ENCODE measurements at regions of chr7 and their contacts with region 1.

Region 1: GRCh38 chr7:116984917-116985316 is 31.6 kb downstream of the ST7 start:
- H3K4me3 ChIP-seq: no peak overlapping the region
- H3K27ac ChIP-seq: no peak overlapping the region
- H3K4me1 ChIP-seq: no peaks in the 10 kb centered on the region
- CTCF ChIP-seq: no peak

Region 2: GRCh38 chr7:116929914-116930913 is 54.7 kb before region 1 on chr7:
- CTCF ChIA-PET with region 1: interaction called, 12 read pairs
- POLR2A ChIA-PET with region 1: no interaction called
- H3K4me3 ChIP-seq: no peak overlapping the region
- H3K27ac ChIP-seq: no peak overlapping the region
- H3K4me1 ChIP-seq: no peaks in the 10 kb centered on the region
- CTCF ChIP-seq: peak; percentile 69; the same call in 1 of the 2 replicates

Region 3: DNA sequence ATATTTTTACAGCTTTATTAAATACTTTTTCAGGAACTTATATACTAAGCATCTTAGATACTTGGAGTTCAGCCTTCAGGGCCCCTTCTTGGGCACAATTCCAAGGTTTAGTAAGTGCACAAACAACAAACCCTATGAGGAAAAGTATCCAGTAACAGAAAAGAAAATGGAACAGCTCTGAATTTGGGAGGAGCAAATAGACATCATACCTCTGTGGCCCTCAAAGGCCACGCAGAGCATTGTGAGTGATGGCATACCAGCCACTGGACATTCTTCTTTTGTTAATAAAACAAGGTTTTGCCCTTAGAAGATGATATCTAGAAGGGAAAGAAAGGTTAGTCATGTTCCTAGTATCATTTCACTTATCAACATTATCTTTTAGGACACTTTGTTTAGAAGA is 14.4 kb after region 1 on chr7:
- CTCF ChIA-PET with region 1: interaction called, 14 read pairs
- POLR2A ChIA-PET with region 1: no interaction called
- H3K4me3 ChIP-seq: no peak overlapping the region
- H3K27ac ChIP-seq: no peak overlapping the region
- H3K4me1 ChIP-seq: no peaks in the 10 kb centered on the region
- CTCF ChIP-seq: no peak

Region 4: DNA sequence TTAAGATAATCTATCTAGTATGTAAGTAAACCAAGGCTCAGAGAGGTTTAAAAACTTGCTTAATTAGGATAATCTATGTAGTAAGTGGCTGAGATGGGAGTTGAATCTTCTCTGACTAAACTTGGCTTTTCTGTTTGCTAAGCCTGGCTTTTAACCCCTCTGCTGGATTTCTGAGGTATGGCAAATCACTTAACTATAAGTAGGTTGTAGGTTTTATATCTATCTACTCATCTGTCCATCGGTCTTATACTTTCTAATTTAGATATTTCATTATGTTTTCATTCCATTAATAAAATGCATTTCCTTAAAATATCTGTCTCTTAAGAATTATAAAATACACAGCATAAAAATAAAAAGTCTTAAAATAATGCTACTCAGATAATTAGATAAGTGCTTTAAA is 27.8 kb after region 1 on chr7:
- CTCF ChIA-PET with region 1: interaction called, 16 read pairs
- POLR2A ChIA-PET with region 1: no interaction called
- H3K4me3 ChIP-seq: no peak overlapping the region
- H3K27ac ChIP-seq: no peak overlapping the region
- H3K4me1 ChIP-seq: peaks cover 21% of the 10 kb centered on the region; the same call in 1 of the 2 replicates
- CTCF ChIP-seq: no peak

Region 5: DNA sequence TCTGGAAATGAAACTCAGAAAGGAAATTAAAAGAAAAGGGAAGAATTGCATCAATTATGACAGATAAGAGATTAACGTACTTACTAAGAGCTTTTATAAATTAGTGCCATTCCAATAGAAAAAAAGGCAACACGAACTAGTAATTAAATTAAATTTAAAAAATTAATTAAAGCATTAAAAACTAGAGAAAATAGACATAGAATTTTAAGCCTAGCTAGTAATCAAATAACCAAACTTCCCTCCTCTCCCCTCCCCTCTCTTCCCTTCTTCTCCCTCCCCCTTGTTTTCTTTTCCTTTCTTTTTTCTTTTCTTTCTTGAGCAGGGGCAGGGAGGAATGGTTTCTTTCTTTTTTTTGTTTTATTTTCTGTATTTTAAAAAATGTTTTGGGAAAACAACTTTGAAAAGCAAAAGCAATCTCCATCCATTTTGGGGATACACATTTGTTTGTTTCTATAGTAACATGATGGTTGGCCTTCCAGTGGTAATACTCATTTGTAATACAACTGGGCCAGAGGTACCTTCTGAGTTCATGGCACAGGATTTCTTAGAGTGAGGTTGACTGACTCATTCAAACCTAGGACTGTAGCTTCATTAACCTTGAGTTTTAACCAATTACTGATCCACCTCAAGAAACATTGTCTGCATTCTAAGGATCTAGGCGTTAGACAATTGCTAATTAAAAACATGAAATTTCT is 101.0 kb after region 1 on chr7:
- CTCF ChIA-PET with region 1: no interaction called
- POLR2A ChIA-PET with region 1: no interaction called
- H3K4me3 ChIP-seq: no peak overlapping the region
- H3K27ac ChIP-seq: no peak overlapping the region
- H3K4me1 ChIP-seq: peaks cover 6% of the 10 kb centered on the region
- CTCF ChIP-seq: no peak

Region 6: DNA sequence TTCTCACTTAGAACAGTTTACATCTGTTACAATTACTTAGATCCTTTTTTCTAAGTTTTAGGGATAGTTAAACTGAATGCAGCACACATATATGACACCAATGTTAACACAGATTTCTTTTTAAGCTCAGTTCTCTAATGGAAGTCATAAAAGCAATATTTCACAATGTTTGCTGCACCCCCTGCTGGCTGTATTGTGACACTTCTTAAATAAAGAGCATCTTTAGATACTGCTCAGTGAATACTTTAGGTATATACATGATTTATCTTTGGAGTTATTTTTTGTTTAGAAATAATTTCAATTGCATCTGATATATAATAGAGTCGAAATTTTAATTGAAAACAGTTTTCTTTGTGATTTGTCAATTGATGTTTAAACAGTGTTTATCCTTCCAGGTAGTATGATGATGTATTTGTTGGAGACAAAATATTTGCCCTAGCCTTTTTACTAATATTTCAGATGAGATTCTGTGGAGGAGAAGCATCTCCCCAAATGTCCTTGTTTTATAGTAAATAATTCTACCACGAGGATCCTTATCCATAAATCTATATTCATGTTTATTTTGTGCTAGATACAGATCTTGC is 142.8 kb after region 1 on chr7:
- CTCF ChIA-PET with region 1: interaction called, 64 read pairs
- POLR2A ChIA-PET with region 1: no interaction called
- H3K4me3 ChIP-seq: no peak overlapping the region
- H3K27ac ChIP-seq: no peak overlapping the region
- H3K4me1 ChIP-seq: peaks cover 19% of the 10 kb centered on the region
- CTCF ChIP-seq: 0 out of 2 replicates have a peak, but pooled peaks have one; percentile 18

Measured in HEK293 (cell line).